Panc1 (cell line): ENCODE measurements at regions of chr19 and their contacts with region 1.

Region 1: DNA sequence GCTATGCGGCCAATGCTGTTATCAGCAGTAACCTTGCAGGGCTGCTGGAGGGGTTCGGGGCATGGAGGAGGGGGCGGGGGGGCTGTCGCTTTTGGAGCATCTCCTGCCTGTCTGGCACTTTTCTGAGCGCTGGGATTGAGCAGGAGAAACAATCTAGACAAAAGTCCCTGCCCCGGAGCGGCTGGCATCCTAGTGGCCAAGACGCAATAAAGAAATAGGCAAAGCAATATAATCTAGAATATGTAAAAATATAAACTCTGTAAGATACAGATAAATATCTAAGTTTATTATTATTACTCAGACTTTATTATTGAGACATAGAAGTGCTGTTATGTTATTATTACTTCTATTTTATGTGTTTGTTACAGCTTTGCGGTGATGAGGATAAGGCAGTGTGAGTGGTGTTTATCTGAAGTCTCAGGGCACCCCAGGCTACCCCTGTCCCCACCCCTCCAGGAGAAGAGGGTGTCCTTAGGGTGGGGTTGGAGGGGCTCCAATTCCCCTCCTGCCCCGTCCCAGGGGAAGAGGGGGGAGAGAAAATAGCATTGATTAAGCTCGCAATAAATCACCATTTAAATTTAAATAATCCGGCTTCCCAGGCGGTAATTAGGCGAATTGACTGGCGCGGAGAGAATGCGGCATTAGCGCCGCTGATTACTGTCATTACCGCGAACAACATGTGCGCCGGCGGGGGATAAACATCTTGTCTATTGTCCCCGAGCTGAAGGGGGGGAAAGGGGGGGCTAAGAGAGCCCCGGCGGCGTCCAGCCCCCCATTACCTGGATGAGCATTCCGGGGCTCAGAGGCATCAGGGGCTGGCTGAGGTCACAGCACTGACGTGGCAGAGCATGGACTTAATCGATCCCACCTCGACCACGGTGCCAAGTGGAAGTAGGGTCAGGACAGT is 3.2 kb downstream of the NPAS1 start:
- DNase-seq: no peak
- ATAC-seq: no peak
- H3K4me3 ChIP-seq: peak overlapping the region in 1 of 2 experiments; percentile 26; a peak in 1 of 4 replicates
- H3K27ac ChIP-seq: no peak overlapping the region
- H3K4me1 ChIP-seq: peaks cover 8% of the 10 kb centered on the region
- H3K27me3 ChIP-seq: no peaks in the 10 kb centered on the region
- CTCF ChIP-seq: no peak

Region 2: DNA sequence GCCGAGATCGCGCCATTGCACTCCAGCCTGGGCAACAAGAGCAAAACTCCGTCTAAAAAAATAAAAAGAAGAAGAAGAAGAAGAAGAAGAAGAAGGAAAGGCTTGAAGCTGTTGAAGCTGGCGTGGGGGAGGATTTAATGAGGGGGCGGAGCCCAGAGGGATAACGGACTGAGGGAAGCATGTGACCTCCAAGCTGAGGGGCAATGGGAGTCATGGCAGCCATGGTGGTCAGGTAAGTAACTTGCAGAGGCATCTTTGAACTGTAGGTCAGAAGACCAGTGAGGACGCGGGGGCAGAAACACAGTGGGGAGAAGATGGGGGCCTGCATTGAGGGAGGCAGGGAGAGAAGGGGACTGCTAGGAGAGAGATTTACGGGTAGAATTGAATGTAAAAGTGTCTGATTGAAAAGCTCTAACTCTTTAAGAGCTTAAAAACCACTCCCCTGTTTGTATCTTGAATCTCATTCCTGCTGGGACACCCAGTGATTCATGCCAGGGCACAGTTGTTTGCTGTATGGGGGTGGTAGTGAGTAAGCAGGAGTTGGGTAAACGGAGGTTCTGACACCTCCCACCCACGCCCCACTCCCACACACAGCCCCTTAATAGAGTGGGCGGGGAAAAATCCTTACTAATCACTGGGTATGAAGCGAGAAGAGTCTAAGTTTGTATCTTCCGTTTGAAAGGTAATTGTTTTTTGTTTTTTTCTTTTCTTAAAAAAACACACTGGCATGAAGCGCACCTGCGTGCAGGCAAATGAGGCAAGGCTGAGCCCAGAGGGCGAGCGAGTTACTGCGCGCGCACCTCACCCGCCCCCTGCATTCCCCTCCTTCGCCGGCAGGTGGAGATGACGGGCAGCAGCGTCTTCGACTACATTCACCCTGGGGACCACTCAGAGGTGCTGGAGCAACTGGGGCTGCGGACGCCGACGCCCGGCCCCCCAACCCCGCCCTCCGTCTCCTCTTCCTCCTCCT is 12.6 kb after region 1 on chr19:
- CTCF ChIA-PET with region 1: no interaction called
- POLR2A ChIA-PET with region 1: interaction called, 12 read pairs
- in situ Hi-C with region 1: no loop called
- intact Hi-C with region 1: no loop called
- DNase-seq: peak; percentile 80
- ATAC-seq: peak; percentile 93
- H3K4me3 ChIP-seq: peak overlapping the region; percentile 43 to 65
- H3K27ac ChIP-seq: peak overlapping the region; percentile 83
- H3K4me1 ChIP-seq: peaks cover 12% of the 10 kb centered on the region
- H3K27me3 ChIP-seq: no peaks in the 10 kb centered on the region
- CTCF ChIP-seq: peak; percentile 92